GM10248 (cell line): ENCODE measurements at regions of chr11 and their contacts with region 1.

Region 1: GRCh38 chr11:124865921-124866583 is 820 bp downstream of the ROBO3 start:
- DNase-seq: peak; percentile 78
- CTCF ChIP-seq: peak; percentile 50

Region 2: GRCh38 chr11:124837491-124837856 is 28.6 kb before region 1 on chr11:
- CTCF ChIA-PET with region 1: interaction called, 13 read pairs
- POLR2A ChIA-PET with region 1: no interaction called
- DNase-seq: peak; percentile 44
- CTCF ChIP-seq: peak; percentile 69

Region 3: DNA sequence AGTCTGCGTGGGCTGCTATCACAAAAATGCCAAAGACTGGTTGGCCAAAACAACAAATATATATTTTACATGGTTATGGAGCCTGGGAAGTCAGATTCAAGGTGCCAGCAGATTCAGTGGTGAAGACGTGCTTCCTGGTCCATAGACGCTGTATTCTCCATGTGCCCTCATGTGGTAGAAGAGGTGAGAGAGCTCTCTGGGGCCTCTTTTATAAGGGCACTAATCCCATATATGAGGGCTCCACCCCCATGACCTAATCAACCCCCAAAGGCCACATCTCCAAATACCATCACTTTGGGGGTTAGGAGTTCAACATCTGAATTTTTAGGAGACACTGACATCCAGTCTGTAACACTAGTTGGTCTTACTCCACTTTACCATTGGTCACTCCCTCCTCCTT is 10.6 kb before region 1 on chr11:
- CTCF ChIA-PET with region 1: interaction called, 10 read pairs
- POLR2A ChIA-PET with region 1: no interaction called
- DNase-seq: no peak
- CTCF ChIP-seq: no peak

Region 4: DNA sequence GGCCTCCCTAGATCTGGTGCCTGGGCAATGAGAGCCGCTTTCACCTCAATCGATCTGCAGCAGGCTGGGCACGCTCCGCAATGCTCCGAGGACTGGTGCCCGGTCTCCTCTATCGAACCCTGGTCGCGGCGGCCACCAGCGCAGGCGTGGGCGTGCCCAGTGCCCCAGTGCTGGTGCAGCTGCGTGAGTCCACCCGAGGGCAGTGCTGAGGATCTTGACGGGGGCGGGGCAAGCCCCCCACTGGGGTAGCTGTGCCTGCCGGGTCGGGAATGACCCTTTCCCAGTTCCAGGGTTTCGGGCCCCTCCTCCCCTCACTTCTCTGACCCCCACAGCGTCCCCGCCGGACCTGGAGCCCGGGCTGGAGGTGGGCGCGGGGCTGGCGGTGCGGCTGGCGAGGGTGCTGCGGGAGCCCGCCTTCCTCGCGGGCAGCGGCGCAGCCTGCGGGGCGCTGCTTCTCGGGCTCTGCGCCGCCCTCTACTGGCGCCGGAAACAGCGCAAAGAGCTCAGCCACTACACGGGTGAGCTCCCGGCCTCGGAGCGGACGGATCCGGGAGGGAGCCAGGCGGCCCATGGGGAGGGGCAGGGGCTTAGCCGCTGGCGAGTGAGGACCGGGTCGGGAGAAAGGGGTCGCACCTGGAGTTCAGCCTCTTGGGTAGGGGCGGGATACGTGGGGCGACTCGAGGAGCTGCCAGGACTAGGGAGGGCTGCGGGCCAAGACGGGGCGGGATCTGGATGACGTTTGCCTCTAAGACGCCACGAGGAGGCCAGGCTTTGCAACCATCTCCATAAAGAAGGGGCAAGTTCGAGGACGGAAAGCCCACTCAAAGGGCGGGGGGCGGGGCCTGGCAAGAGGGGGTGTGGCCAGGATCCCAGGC is 10.1 kb after region 1 on chr11:
- CTCF ChIA-PET with region 1: interaction called, 28 read pairs
- POLR2A ChIA-PET with region 1: no interaction called
- DNase-seq: peak; percentile 91
- CTCF ChIP-seq: peak; percentile 93

Region 5: GRCh38 chr11:125263268-125263790 is 397.3 kb after region 1 on chr11:
- CTCF ChIA-PET with region 1: no interaction called
- POLR2A ChIA-PET with region 1: no interaction called
- DNase-seq: no peak
- CTCF ChIP-seq: no peak